ENCODE measurements at regions of chr10 and their contacts with region 1.

Region 1: GRCh38 chr10:61586829-61587228 is 75.9 kb upstream of the CABCOCO1 start:
- DNase-seq: no peak
- ATAC-seq: no peak
- H3K4me3 ChIP-seq: no peak overlapping the region
- H3K4me3 Mint-ChIP-seq: no peak overlapping the region
- H3K27ac ChIP-seq: no peak overlapping the region
- H3K27ac Mint-ChIP-seq: no peak overlapping the region
- H3K4me1 ChIP-seq: no peaks in the 10 kb centered on the region
- H3K4me1 Mint-ChIP-seq: no peaks in the 10 kb centered on the region
- H3K27me3 ChIP-seq: no peaks in the 10 kb centered on the region
- H3K27me3 Mint-ChIP-seq: no peaks in the 10 kb centered on the region
- CTCF ChIP-seq: no peak

Region 2: DNA sequence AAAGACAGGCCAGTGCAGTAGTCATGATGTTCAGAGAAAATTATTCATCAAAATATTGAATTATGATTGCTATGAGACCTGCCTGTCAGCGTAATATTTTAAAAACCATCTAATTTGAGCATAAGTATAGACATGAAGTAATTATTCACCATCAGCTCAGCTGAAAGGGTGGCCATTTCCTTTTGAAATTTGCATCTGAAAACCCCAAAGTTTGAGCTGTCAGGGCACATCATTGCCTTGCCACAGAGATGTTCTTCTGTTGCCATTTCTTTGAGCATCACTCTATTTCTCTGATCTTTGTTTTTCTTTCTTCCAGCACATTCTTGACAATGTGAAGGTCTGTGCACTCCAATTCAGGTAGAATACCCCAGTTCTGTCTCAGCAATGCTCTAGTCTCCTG is 495.3 kb before region 1 on chr10:
- CTCF ChIA-PET with region 1: no interaction called
- POLR2A ChIA-PET with region 1: no interaction called
- intact Hi-C with region 1: no loop called
- DNase-seq: no peak
- ATAC-seq: no peak
- H3K4me3 ChIP-seq: no peak overlapping the region
- H3K4me3 Mint-ChIP-seq: no peak overlapping the region
- H3K27ac ChIP-seq: no peak overlapping the region
- H3K27ac Mint-ChIP-seq: no peak overlapping the region
- H3K4me1 ChIP-seq: no peaks in the 10 kb centered on the region
- H3K4me1 Mint-ChIP-seq: no peaks in the 10 kb centered on the region
- H3K27me3 ChIP-seq: no peaks in the 10 kb centered on the region
- H3K27me3 Mint-ChIP-seq: no peaks in the 10 kb centered on the region
- CTCF ChIP-seq: no peak

Region 3: DNA sequence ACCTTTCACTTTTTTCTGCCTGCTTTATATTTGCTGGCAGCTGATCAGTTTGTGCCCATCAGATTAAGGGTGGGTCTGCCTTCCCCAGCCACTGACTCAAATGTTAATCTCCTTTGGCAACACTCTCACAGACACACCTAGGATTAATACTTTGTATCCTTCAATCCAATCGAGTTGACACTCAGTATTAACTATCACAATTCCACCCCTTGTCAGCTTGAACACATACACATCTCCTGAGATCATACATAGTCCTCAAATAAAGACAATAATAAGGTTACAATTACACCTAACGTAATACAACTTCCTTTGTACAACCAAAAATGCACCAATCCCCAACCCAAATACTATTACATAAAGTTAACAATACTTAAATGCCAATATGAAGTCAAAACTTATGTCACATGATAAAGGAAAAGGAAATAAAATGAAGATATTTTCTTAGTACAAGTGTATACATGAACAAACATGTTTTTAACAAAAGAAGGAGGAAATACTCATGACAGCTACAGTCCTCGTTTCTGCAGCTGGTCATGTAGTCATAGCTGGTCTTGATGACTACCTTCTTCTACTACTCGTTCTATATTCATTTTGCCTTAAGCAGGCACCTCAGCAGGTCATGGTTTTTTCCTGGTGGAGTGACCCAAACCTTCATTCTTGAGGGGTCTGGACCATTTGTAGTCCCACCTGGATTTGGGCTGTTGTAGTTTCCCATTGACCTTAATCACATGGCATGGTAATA is 20.8 kb before region 1 on chr10:
- CTCF ChIA-PET with region 1: no interaction called
- POLR2A ChIA-PET with region 1: no interaction called
- intact Hi-C with region 1: loop called in 1 of 2 experiments (anchors 2 kb)
- DNase-seq: no peak
- ATAC-seq: no peak
- H3K4me3 ChIP-seq: no peak overlapping the region
- H3K4me3 Mint-ChIP-seq: no peak overlapping the region
- H3K27ac ChIP-seq: no peak overlapping the region
- H3K27ac Mint-ChIP-seq: no peak overlapping the region
- H3K4me1 ChIP-seq: no peaks in the 10 kb centered on the region
- H3K4me1 Mint-ChIP-seq: no peaks in the 10 kb centered on the region
- H3K27me3 ChIP-seq: no peaks in the 10 kb centered on the region
- H3K27me3 Mint-ChIP-seq: no peaks in the 10 kb centered on the region
- CTCF ChIP-seq: no peak